ENCODE measurements at regions of chr17 and their contacts with region 1.

Region 1: GRCh38 chr17:17836250-17836817 is 452 bp downstream of the SREBF1 start:
- DNase-seq: peak; percentile 95 to 98 (median 97)
- H3K4me3 ChIP-seq: peak overlapping the region; percentile 48 to 64
- H3K4me3 Mint-ChIP-seq: peak overlapping the region; percentile 73 to 93 (median 89)
- H3K27ac ChIP-seq: peak overlapping the region; percentile 98
- H3K27ac Mint-ChIP-seq: peak overlapping the region; percentile 95 to 99 (median 98)
- H3K4me1 ChIP-seq: peaks cover 57% of the 10 kb centered on the region
- H3K4me1 Mint-ChIP-seq: peaks cover 35 to 78% (median 62%) of the 10 kb centered on the region in 4 donors
- H3K27me3 ChIP-seq: no peaks in the 10 kb centered on the region
- H3K27me3 Mint-ChIP-seq: no peaks in the 10 kb centered on the region

Region 2: GRCh38 chr17:17666111-17666714 is 170.1 kb before region 1 on chr17:
- CTCF ChIA-PET with region 1: no interaction called
- POLR2A ChIA-PET with region 1: no interaction called
- intact Hi-C with region 1: no loop called
- DNase-seq: no peak
- H3K4me3 ChIP-seq: no peak overlapping the region
- H3K4me3 Mint-ChIP-seq: no peak overlapping the region
- H3K27ac ChIP-seq: no peak overlapping the region
- H3K27ac Mint-ChIP-seq: peak overlapping the region in 1 of 7 donors; percentile 28
- H3K4me1 ChIP-seq: peaks cover 13% of the 10 kb centered on the region
- H3K4me1 Mint-ChIP-seq: peaks cover 8 to 18% (median 10%) of the 10 kb centered on the region in 4 donors
- H3K27me3 ChIP-seq: no peaks in the 10 kb centered on the region
- H3K27me3 Mint-ChIP-seq: no peaks in the 10 kb centered on the region

Region 3: DNA sequence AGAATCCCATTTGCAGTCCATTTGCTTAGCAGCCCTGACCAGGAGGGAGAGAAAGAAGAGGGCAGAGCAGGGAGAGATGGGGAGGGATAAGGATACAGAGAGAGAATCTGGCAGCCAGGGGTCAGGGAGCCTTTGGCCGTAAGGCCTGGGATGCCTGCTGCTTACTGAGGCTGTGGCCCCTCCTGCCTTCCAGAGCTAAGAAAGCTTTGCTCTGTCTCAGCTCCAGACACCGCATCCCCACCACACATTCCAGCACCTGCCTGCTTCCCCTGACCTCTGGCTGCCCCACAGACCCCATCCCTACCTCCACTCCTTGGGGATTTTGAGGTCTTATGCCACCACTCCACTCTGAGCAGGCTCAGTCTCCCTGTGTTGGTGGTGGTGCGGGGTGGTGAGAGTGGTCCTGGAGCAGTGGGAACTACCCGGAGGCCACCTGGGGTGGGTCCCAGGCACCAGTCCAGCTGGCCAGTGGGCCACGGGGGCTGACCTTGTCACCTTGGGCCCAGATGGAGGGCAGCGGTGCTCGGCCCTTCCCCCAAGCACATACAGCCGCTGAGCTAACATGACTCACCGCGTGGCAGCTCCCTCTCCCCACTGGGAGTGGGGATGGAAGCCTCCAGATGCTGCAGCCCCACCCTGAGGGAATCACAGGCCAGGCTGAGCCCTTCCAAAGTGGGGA is 96.8 kb before region 1 on chr17:
- CTCF ChIA-PET with region 1: no interaction called
- POLR2A ChIA-PET with region 1: no interaction called
- intact Hi-C with region 1: no loop called
- DNase-seq: no peak
- H3K4me3 ChIP-seq: no peak overlapping the region
- H3K4me3 Mint-ChIP-seq: peak overlapping the region in 2 of 8 donors; percentile 10 to 66
- H3K27ac ChIP-seq: no peak overlapping the region
- H3K27ac Mint-ChIP-seq: peak overlapping the region in 2 of 7 donors; percentile 44 to 85
- H3K4me1 ChIP-seq: peaks cover 9% of the 10 kb centered on the region
- H3K4me1 Mint-ChIP-seq: peaks cover 8 to 29% (median 16%) of the 10 kb centered on the region in 4 donors
- H3K27me3 ChIP-seq: no peaks in the 10 kb centered on the region
- H3K27me3 Mint-ChIP-seq: no peaks in the 10 kb centered on the region

Region 4: DNA sequence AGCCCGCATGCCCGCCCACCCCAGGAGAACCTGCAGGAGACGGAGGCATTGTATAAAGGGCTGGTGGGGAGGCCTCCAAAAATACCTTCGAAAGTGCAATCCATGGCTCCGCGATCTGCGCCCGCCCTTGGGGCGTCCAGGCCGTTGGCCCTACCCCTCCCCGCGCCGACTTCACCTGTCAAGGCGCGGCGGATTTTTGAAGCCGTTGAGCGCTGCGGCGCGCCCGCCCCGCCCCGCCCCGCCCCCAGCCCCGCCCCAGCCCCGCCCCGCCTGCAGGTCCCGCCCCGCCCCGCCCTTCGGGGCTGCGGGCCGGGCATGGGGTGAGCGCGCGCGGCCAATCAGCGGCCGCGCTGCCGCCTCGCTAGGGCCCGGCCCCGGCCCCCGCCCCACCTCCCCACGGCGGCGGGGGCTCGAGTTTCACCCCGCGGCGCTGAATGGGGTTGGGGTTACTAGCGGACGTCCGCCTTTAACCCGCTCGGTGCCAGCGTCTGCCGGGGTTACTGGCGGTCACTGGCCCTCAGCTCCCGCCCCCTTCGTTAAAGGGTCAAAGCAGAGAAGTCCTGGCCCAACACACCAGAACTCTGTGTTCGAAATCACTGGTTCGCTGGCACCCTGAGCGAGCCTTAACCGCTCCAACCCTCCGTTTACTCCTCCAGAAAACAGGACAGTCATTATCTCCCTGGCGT is 12.8 kb before region 1 on chr17:
- CTCF ChIA-PET with region 1: interaction called, 6 read pairs
- POLR2A ChIA-PET with region 1: interaction called, 79 read pairs
- intact Hi-C with region 1: loop called (anchors 1 kb)
- DNase-seq: peak; percentile 81 to 87 (median 85)
- H3K4me3 ChIP-seq: peak overlapping the region; percentile 38 to 53
- H3K4me3 Mint-ChIP-seq: peak overlapping the region; percentile 76 to 92 (median 81)
- H3K27ac ChIP-seq: peak overlapping the region; percentile 82
- H3K27ac Mint-ChIP-seq: peak overlapping the region; percentile 88 to 97 (median 96)
- H3K4me1 ChIP-seq: peaks cover 87% of the 10 kb centered on the region
- H3K4me1 Mint-ChIP-seq: peaks cover 41 to 96% (median 76%) of the 10 kb centered on the region in 4 donors
- H3K27me3 ChIP-seq: no peaks in the 10 kb centered on the region
- H3K27me3 Mint-ChIP-seq: no peaks in the 10 kb centered on the region

Region 5: GRCh38 chr17:17849845-17850373 is 13.6 kb after region 1 on chr17:
- CTCF ChIA-PET with region 1: interaction called, 5 read pairs
- POLR2A ChIA-PET with region 1: interaction called, 59 read pairs
- intact Hi-C with region 1: loop called (anchors 1 kb)
- DNase-seq: peak; percentile 64 to 80 (median 71)
- H3K4me3 ChIP-seq: peak overlapping the region in 1 of 2 donors; percentile 22
- H3K4me3 Mint-ChIP-seq: peak overlapping the region in 7 of 8 donors; percentile 32 to 81 (median 55)
- H3K27ac ChIP-seq: peak overlapping the region; percentile 73
- H3K27ac Mint-ChIP-seq: peak overlapping the region; percentile 93 to 97 (median 95)
- H3K4me1 ChIP-seq: peaks cover 54% of the 10 kb centered on the region
- H3K4me1 Mint-ChIP-seq: peaks cover 25 to 63% (median 48%) of the 10 kb centered on the region in 4 donors
- H3K27me3 ChIP-seq: no peaks in the 10 kb centered on the region
- H3K27me3 Mint-ChIP-seq: no peaks in the 10 kb centered on the region

Region 6: GRCh38 chr17:17859909-17860765 is 23.8 kb after region 1 on chr17:
- CTCF ChIA-PET with region 1: interaction called, 9 read pairs
- POLR2A ChIA-PET with region 1: interaction called, 5 read pairs
- intact Hi-C with region 1: loop called (anchors 2 kb)
- DNase-seq: peak; percentile 61 to 75 (median 69)
- H3K4me3 ChIP-seq: no peak overlapping the region
- H3K4me3 Mint-ChIP-seq: no peak overlapping the region
- H3K27ac ChIP-seq: no peak overlapping the region
- H3K27ac Mint-ChIP-seq: peak overlapping the region in 3 of 7 donors; percentile 25 to 56 (median 29)
- H3K4me1 ChIP-seq: peaks cover 22% of the 10 kb centered on the region
- H3K4me1 Mint-ChIP-seq: peaks cover 11 to 44% (median 22%) of the 10 kb centered on the region in 4 donors
- H3K27me3 ChIP-seq: no peaks in the 10 kb centered on the region
- H3K27me3 Mint-ChIP-seq: no peaks in the 10 kb centered on the region

Region 7: GRCh38 chr17:17959520-17960361 is 123.4 kb after region 1 on chr17:
- CTCF ChIA-PET with region 1: no interaction called
- POLR2A ChIA-PET with region 1: interaction called, 3 read pairs
- intact Hi-C with region 1: loop called (anchors 5 kb)
- DNase-seq: peak in 4 of 5 donors; percentile 26 to 38 (median 28)
- H3K4me3 ChIP-seq: peak overlapping the region; percentile 32 to 75
- H3K4me3 Mint-ChIP-seq: peak overlapping the region; percentile 79 to 97 (median 86)
- H3K27ac ChIP-seq: peak overlapping the region; percentile 65
- H3K27ac Mint-ChIP-seq: peak overlapping the region; percentile 91 to 100 (median 96)
- H3K4me1 ChIP-seq: peaks cover 46% of the 10 kb centered on the region
- H3K4me1 Mint-ChIP-seq: peaks cover 49 to 74% (median 61%) of the 10 kb centered on the region in 4 donors
- H3K27me3 ChIP-seq: no peaks in the 10 kb centered on the region
- H3K27me3 Mint-ChIP-seq: no peaks in the 10 kb centered on the region

Measured in CD4-positive, alpha-beta memory T cell (primary cell).